Ascending aorta (tissue), 2 donors: ENCODE measurements at regions of chr4 and their contacts with region 1.

Region 1: DNA sequence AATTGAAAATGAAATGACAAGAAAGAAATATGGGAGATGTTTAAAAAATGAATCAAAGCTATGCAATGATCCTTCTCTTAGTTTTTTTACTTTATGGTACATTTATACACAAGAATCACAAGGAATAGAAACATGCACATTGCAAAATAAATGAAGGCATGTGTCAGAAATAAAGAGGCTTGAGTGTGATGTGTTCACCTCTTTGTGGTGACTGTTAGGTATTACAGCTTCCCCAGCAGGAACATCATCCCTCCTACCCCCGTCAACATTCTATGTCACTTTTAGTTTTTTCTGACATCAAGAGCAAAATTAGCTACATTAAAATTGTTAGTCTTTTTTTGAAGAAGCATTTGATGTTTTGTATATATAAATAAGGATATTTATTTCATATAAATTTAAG is 214.8 kb downstream of the SLC4A4 start:
- DNase-seq: no peak
- H3K4me3 ChIP-seq: no peak overlapping the region
- H3K27ac ChIP-seq: no peak overlapping the region
- H3K4me1 ChIP-seq: no peaks in the 10 kb centered on the region
- H3K27me3 ChIP-seq: no peaks in the 10 kb centered on the region
- CTCF ChIP-seq: peak; percentile 10 to 36 (median 26)

Region 2: GRCh38 chr4:71074452-71075299 is 478.9 kb before region 1 on chr4:
- intact Hi-C with region 1: loop called (anchors 10 kb)
- DNase-seq: peak in 1 of 2 donors; percentile 67
- H3K4me3 ChIP-seq: peak overlapping the region; percentile 29 to 47
- H3K27ac ChIP-seq: peak overlapping the region; percentile 59 to 64
- H3K4me1 ChIP-seq: no peaks in the 10 kb centered on the region
- H3K27me3 ChIP-seq: no peaks in the 10 kb centered on the region
- CTCF ChIP-seq: no peak

Region 3: DNA sequence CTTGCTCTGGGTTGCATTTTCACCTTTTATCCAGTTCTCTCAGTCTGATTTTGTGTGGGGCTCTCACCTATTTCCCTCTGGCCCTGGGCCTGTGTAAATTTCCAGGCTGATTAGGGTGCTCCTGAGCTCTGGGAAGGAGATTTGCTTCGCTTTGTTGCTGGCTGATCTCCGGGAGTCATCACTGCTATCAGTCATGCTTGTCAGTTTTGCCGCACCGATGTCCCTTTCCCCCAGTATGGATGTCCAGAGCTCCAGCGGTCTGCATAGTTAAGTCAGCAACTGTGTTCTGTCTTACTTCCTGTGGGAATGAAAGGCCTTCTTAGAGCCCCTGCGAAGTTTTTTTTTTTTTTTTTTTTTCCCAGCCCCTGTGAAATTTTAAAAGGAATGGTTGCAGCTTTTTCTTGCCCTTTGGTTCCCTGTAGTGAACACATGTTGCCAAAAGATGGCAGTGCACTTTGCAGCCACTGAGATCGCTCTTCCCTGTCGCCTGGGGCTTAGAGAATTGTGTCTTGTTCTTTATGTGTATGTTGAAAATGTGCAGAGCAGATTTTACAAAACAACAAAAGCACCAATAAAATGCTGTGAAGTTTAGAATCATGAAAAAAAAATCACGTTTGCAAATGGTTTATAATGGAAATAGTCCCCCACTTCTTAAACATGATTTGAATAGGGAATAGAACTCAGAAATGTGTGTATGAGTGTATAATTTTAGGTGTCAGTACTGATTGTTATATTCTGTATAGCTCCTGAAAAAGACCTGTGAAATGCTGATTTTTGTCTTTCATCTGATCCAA is 323.9 kb before region 1 on chr4:
- intact Hi-C with region 1: loop called (anchors 5 kb)
- DNase-seq: no peak
- H3K4me3 ChIP-seq: no peak overlapping the region
- H3K27ac ChIP-seq: peak overlapping the region in 1 of 2 donors; percentile 35
- H3K4me1 ChIP-seq: peaks cover 0 to 13% of the 10 kb centered on the region in 2 donors
- H3K27me3 ChIP-seq: no peaks in the 10 kb centered on the region
- CTCF ChIP-seq: peak; percentile 40 to 79 (median 71)

Region 4: DNA sequence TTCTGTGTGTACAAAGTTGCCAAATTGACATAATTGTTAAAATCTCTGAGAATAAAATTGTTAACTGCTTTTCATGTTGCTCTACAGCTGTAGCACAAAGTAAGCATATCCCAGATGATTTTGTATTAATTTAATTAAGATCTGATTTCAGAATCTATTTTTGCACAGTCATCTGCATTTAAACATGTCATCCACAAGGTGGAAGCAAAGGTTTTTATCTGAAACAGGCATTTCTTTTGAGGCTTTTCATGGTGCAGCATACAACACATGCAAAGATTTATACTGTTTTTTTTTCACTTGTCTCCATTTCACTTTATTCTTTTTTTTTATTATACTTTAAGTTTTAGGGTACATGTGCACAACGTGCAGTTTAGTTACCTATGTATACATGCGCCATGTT is 179.1 kb after region 1 on chr4:
- intact Hi-C with region 1: no loop called
- DNase-seq: no peak
- H3K4me3 ChIP-seq: no peak overlapping the region
- H3K27ac ChIP-seq: no peak overlapping the region
- H3K4me1 ChIP-seq: no peaks in the 10 kb centered on the region
- H3K27me3 ChIP-seq: no peaks in the 10 kb centered on the region
- CTCF ChIP-seq: no peak

Region 5: DNA sequence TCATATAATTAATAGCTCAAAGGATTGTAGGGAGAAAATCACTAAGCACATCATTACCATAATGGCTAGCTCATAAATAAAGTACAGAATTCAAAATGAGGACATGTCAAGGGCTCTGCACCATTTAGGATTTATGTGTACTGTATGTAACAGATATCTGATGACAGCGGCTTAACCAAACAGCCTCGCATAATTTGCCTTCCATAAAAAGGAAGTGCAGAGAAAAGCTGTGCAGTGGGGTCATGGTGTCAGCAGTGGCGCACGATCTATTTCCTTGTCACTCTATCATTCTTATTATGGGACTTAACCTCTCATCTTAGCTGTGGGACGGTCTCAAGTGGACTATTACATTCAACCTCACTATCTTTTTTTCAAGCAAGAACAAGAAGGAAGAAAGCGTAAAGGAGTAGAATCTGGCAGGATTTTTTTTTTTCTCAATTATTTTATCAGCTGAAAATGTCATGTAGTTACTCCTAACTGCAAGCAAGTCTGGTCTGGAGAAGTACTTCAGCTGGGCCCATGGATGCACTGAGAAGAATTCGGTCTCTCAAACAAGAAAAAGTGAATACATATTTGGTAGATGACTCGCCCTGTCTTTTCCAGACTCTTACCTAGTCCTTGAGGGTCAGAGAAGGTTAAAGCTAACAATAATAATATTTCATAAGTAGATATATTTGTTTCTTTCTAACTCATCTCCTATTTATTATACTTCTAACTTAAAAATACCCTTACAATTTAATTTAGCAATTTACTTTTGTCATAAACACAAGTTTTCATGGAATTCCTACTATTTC is 1421.3 kb after region 1 on chr4:
- intact Hi-C with region 1: no loop called
- DNase-seq: no peak
- H3K4me3 ChIP-seq: no peak overlapping the region
- H3K27ac ChIP-seq: peak overlapping the region; percentile 53 to 73
- H3K4me1 ChIP-seq: peaks cover 4 to 23% of the 10 kb centered on the region in 2 donors
- H3K27me3 ChIP-seq: no peaks in the 10 kb centered on the region
- CTCF ChIP-seq: no peak